ENCODE measurements at regions of chr10 and their contacts with region 1.

Region 1: DNA sequence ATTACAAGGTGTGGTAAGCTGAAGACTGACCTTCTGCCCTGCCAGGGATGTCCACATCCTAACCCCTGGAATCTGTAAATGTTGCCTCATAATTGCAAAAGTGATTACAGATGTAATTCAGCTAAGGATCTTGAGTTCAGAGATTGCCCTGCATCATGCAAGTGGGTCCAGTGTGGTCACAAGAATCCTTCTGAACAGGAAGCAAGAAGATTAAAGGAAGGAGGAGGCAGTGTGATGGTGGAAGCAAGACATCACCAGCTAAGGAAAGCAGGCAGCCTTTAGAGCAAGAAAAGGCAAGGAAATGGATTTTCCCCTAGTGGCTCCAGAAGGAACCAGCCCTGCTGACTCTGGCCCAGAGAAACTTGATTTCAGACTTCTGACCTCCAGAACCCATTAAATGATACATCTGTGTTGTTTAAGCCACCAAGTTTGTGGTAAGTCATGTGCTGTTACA is 78.1 kb downstream of the USP6NL start:
- DNase-seq: no peak
- ATAC-seq: peak; percentile 27
- H3K4me3 ChIP-seq: 0 out of 2 replicates have a peak overlapping the region, but pooled peaks have one; percentile 0
- H3K27ac ChIP-seq: peak overlapping the region; percentile 90
- H3K4me1 ChIP-seq: peaks cover 44% of the 10 kb centered on the region
- H3K27me3 ChIP-seq: no peaks in the 10 kb centered on the region
- CTCF ChIP-seq: peak in 1 of 3 experiments; percentile 35; a peak in 1 of 6 replicates
- EP300 ChIP-seq: no peak
- POLR2A ChIP-seq: no peak
- RAD21 ChIP-seq: no peak

Region 2: DNA sequence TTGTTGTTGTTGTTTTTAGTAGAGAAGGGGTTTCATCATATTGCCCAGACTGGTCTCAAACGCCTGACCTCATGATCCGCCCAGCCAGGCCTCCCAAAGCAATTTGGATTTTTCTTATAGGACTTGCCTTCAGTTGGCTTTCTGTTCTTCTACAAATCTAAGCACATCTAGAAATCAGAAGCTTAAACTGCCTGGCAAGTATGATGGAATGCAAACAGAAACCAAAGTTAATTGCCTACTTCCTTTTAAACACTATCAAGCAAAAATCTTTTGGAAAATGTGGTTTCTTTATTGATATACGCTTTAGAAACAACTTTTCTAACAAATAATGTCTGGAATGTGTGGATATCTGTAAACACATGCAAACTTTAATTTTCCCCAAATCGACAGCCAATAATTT is 13.2 kb after region 1 on chr10:
- CTCF ChIA-PET with region 1: interaction called, 7 read pairs
- POLR2A ChIA-PET with region 1: interaction called, 4 read pairs
- RAD21 ChIA-PET with region 1: interaction called, 9 read pairs
- SMC1A ChIA-PET with region 1: interaction called, 21 read pairs
- in situ Hi-C with region 1: no loop called
- intact Hi-C with region 1: no loop called
- DNase-seq: no peak
- ATAC-seq: no peak
- H3K4me3 ChIP-seq: no peak overlapping the region
- H3K27ac ChIP-seq: no peak overlapping the region
- H3K4me1 ChIP-seq: peaks cover 22% of the 10 kb centered on the region
- H3K27me3 ChIP-seq: no peaks in the 10 kb centered on the region
- CTCF ChIP-seq: no peak
- EP300 ChIP-seq: no peak
- POLR2A ChIP-seq: no peak
- RAD21 ChIP-seq: no peak

Region 3: GRCh38 chr10:11551916-11552602 is 18.7 kb after region 1 on chr10:
- CTCF ChIA-PET with region 1: interaction called, 7 read pairs
- POLR2A ChIA-PET with region 1: interaction called, 4 read pairs
- RAD21 ChIA-PET with region 1: interaction called, 9 read pairs
- SMC1A ChIA-PET with region 1: interaction called, 21 read pairs
- in situ Hi-C with region 1: no loop called
- intact Hi-C with region 1: no loop called
- DNase-seq: no peak
- ATAC-seq: peak; percentile 44
- H3K4me3 ChIP-seq: no peak overlapping the region
- H3K27ac ChIP-seq: peak overlapping the region; percentile 45; the same call in 1 of the 2 replicates
- H3K4me1 ChIP-seq: peaks cover 58% of the 10 kb centered on the region
- H3K27me3 ChIP-seq: no peaks in the 10 kb centered on the region
- CTCF ChIP-seq: no peak
- EP300 ChIP-seq: no peak
- POLR2A ChIP-seq: no peak
- RAD21 ChIP-seq: no peak